ENCODE measurements at regions of chr2 and their contacts with region 1.

Region 1: GRCh38 chr2:241637000-241637791 is at the starts of genes ATG4B and THAP4:
- DNase-seq: peak; percentile 88 to 95 (median 95)
- ATAC-seq: peak; percentile 90 to 91
- H3K4me3 ChIP-seq: peak within 1 kb of the TSS; percentile 88
- H3K27ac ChIP-seq: peak within 1 kb of the TSS; percentile 83
- H3K4me1 ChIP-seq: peaks cover 2% of the 10 kb centered on the region
- H3K27me3 ChIP-seq: no peaks in the 10 kb centered on the region
- total RNA-seq, gene ATG4B: 46.5 to 53.8 (median 47.5) TPM
- total RNA-seq, gene THAP4: 74.2 to 103 (median 90.3) TPM

Region 2: GRCh38 chr2:241064008-241064801 is 573.0 kb before region 1 on chr2:
- intact Hi-C with region 1: no loop called
- DNase-seq: peak in 2 of 3 donors; percentile 66 to 69
- ATAC-seq: peak; percentile 42
- H3K4me3 ChIP-seq: no peak overlapping the region
- H3K27ac ChIP-seq: no peak overlapping the region
- H3K4me1 ChIP-seq: no peaks in the 10 kb centered on the region
- H3K27me3 ChIP-seq: no peaks in the 10 kb centered on the region

Region 3: GRCh38 chr2:241508240-241509154 is 128.7 kb before region 1 on chr2 and contains the start of gene STK25:
- intact Hi-C with region 1: loop called in 2 of 4 experiments (anchors 10 kb)
- DNase-seq: peak; percentile 98 to 100 (median 99)
- ATAC-seq: peak; percentile 97 to 98
- H3K4me3 ChIP-seq: peak within 1 kb of the TSS; percentile 88
- H3K27ac ChIP-seq: peak within 1 kb of the TSS; percentile 67
- H3K4me1 ChIP-seq: peaks cover 5% of the 10 kb centered on the region
- H3K27me3 ChIP-seq: no peaks in the 10 kb centered on the region
- total RNA-seq, gene STK25: 84.7 to 112 (median 95.3) TPM